Activated CD4-positive, alpha-beta memory T cell treated with anti-CD3 and anti-CD28 coated beads for 36 hours (primary cell): ENCODE measurements at regions of chr1 and their contacts with region 1.

Region 1: GRCh38 chr1:110209715-110210603 is at the start of gene KCNC4:
- DNase-seq: peak; percentile 95
- H3K4me3 Mint-ChIP-seq: peak within 1 kb of the TSS; percentile 88
- H3K27ac Mint-ChIP-seq: peak within 1 kb of the TSS; percentile 84
- H3K4me1 Mint-ChIP-seq: peaks cover 47% of the 10 kb centered on the region
- H3K27me3 Mint-ChIP-seq: no peaks in the 10 kb centered on the region
- total RNA-seq, gene KCNC4: 15.0 to 15.1 TPM

Region 2: GRCh38 chr1:109984456-109985275 is 225.3 kb before region 1 on chr1 and contains the start of gene AHCYL1:
- CTCF ChIA-PET with region 1: no interaction called
- POLR2A ChIA-PET with region 1: no interaction called
- intact Hi-C with region 1: no loop called
- DNase-seq: peak; percentile 100
- H3K4me3 Mint-ChIP-seq: peak within 1 kb of the TSS; percentile 99
- H3K27ac Mint-ChIP-seq: peak within 1 kb of the TSS; percentile 92
- H3K4me1 Mint-ChIP-seq: peaks cover 39% of the 10 kb centered on the region
- H3K27me3 Mint-ChIP-seq: no peaks in the 10 kb centered on the region
- total RNA-seq, gene AHCYL1: 89.6 to 92.3 TPM

Region 3: DNA sequence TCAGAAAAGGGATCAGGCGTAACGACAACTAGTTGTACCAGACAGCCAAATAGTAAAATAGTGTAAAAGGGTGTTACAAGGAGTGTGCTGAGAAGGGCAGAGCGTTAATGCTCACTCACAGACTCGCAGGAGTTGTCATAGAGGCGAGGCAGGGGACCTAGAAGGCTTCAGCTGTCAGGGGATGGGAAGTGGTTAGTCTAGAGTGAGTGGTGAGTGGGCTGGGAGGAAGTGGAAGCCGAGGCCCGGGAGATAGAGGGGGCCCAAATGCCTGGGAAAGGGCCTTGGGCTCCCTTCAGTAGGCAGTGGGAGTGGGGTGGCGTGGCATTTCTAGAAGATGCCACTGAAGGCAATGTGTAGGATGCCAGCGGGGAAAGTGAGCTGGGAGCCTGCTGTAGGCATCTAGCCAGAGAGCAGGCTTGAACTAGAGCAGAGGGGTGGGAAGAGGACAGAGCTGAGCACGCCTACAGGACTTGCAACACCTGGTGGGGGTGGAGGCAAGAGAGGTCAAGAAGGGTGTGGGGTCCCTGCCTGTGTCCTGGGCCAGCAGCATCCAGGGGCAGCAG is 49.3 kb before region 1 on chr1:
- CTCF ChIA-PET with region 1: no interaction called
- POLR2A ChIA-PET with region 1: no interaction called
- intact Hi-C with region 1: no loop called
- DNase-seq: no peak
- H3K4me3 Mint-ChIP-seq: no peak overlapping the region
- H3K27ac Mint-ChIP-seq: no peak overlapping the region
- H3K4me1 Mint-ChIP-seq: no peaks in the 10 kb centered on the region
- H3K27me3 Mint-ChIP-seq: peaks cover 27% of the 10 kb centered on the region

Region 4: DNA sequence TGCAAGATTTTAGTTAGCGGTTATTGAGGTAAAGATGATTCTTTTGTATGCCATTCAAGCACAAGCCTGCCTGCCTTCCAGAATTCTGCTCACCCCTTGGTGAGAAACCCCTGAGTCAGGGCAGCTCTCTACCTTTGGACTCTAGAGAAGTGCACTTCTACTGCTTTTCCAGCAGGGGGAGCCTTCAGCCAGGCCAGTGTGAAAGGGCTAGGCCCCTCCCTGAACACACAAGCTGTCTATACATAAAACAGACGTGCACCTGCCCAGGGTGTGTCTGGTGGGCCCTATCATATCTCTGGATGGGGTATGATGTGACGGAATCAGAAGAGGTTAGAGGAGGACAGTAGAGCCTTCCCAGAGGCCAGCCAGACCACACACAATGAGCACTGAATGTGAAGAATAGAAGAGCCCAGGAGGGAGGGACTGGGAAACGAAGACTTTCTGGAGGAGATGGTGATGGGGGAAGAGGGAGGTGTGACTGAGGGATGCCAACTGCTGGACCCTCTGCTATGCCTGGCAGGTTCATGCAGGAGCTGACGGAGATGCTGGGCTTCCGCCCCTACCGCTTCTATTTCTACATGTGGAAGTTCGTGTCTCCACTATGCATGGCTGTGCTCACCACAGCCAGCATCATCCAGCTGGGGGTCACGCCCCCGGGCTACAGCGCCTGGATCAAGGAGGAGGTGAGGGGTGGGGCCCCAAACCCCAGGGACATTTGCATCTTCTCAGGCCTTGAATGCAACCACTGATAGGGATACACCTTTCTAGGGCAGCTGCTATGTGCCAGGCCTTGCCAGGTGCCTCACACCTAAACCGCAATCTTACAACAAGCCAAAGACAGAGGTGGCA is 12.8 kb before region 1 on chr1:
- CTCF ChIA-PET with region 1: interaction called, 41 read pairs
- POLR2A ChIA-PET with region 1: no interaction called
- intact Hi-C with region 1: no loop called
- DNase-seq: peak; percentile 63
- H3K4me3 Mint-ChIP-seq: no peak overlapping the region
- H3K27ac Mint-ChIP-seq: no peak overlapping the region
- H3K4me1 Mint-ChIP-seq: no peaks in the 10 kb centered on the region
- H3K27me3 Mint-ChIP-seq: no peaks in the 10 kb centered on the region

Region 5: GRCh38 chr1:110245876-110246620 is 36.1 kb after region 1 on chr1:
- CTCF ChIA-PET with region 1: interaction called, 21 read pairs
- POLR2A ChIA-PET with region 1: no interaction called
- intact Hi-C with region 1: no loop called
- DNase-seq: no peak
- H3K4me3 Mint-ChIP-seq: no peak overlapping the region
- H3K27ac Mint-ChIP-seq: no peak overlapping the region
- H3K4me1 Mint-ChIP-seq: peaks cover 8% of the 10 kb centered on the region
- H3K27me3 Mint-ChIP-seq: no peaks in the 10 kb centered on the region

Region 6: GRCh38 chr1:110272045-110272444 is 62.1 kb after region 1 on chr1:
- CTCF ChIA-PET with region 1: interaction called, 21 read pairs
- POLR2A ChIA-PET with region 1: no interaction called
- intact Hi-C with region 1: no loop called
- DNase-seq: no peak
- H3K4me3 Mint-ChIP-seq: no peak overlapping the region
- H3K27ac Mint-ChIP-seq: no peak overlapping the region
- H3K4me1 Mint-ChIP-seq: no peaks in the 10 kb centered on the region
- H3K27me3 Mint-ChIP-seq: peaks cover 3% of the 10 kb centered on the region

Region 7: GRCh38 chr1:110407260-110408210 is 197.6 kb after region 1 on chr1 and contains the start of gene LAMTOR5:
- CTCF ChIA-PET with region 1: interaction called, 8 read pairs
- POLR2A ChIA-PET with region 1: no interaction called
- intact Hi-C with region 1: loop called (anchors 2 kb)
- DNase-seq: peak; percentile 96
- H3K4me3 Mint-ChIP-seq: peak within 1 kb of the TSS; percentile 100
- H3K27ac Mint-ChIP-seq: peak within 1 kb of the TSS; percentile 97
- H3K4me1 Mint-ChIP-seq: peaks cover 17% of the 10 kb centered on the region
- H3K27me3 Mint-ChIP-seq: no peaks in the 10 kb centered on the region
- total RNA-seq, gene LAMTOR5: 151 to 153 TPM

Region 8: GRCh38 chr1:110630839-110631663 is 421.1 kb after region 1 on chr1:
- CTCF ChIA-PET with region 1: no interaction called
- POLR2A ChIA-PET with region 1: no interaction called
- intact Hi-C with region 1: loop called (anchors 10 kb)
- DNase-seq: peak; percentile 92
- H3K4me3 Mint-ChIP-seq: no peak overlapping the region
- H3K27ac Mint-ChIP-seq: no peak overlapping the region
- H3K4me1 Mint-ChIP-seq: peaks cover 66% of the 10 kb centered on the region
- H3K27me3 Mint-ChIP-seq: no peaks in the 10 kb centered on the region